ENCODE measurements at regions of chr18 and their contacts with region 1.

Region 1: GRCh38 chr18:42114310-42114943 is 159.4 kb downstream of the PIK3C3 start:
- DNase-seq: peak in 34 of 35 experiments; percentile 5 to 70 (median 26)
- ATAC-seq: peak in 3 of 4 experiments; percentile 60 to 73 (median 68)
- H3K4me3 ChIP-seq: no peak overlapping the region
- H3K4me3 Mint-ChIP-seq: no peak overlapping the region
- H3K27ac ChIP-seq: no peak overlapping the region
- H3K27ac Mint-ChIP-seq: peak overlapping the region in 1 of 2 donors; percentile 69
- H3K4me1 ChIP-seq: peaks cover 0 to 3% of the 10 kb centered on the region in 2 experiments
- H3K4me1 Mint-ChIP-seq: peaks cover 12 to 13% (median 12%) of the 10 kb centered on the region in 3 donors
- H3K27me3 ChIP-seq: peaks cover 0 to 2% of the 10 kb centered on the region in 2 experiments
- H3K27me3 Mint-ChIP-seq: peaks cover 0 to 4% of the 10 kb centered on the region in 2 donors

Region 2: DNA sequence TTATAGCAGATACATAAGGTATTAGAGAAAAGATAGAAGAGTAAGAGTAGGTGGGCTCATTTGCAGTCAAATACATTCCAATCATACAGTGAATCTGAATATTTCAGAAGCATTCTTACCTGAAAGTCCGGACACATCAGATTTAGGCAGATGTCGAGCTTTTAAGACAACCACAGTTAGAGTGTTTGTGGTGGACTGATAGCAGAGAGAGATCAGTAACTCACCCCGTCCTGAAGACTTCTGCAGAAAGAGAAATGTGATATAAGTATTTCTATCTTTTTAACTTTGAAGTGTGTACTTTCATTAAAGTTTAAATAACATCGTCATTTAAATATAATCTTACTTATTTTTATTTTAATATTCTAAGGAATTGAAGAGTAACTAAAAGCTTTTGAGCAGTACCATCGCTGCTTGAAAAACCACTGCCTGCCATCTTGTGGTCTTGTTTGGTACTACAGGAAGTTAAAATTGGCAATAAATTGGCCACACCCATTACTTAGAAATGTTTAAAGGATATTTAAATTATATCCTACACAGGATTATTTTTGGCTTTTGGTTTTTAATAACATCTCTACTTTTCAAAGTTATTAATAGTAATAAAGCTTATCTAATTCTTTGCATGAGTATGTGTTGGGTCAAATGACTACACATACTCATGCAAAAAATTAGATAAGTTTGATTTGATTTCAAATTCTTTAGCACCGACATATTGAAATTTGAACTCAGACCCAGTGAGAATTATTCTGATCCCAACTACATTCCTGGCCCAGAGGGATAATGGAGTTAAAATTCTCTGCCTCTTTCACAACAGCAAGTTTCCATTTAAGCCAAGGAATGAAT is 1157.4 kb after region 1 on chr18:
- CTCF ChIA-PET with region 1: interaction called, 18 to 29 read pairs
- POLR2A ChIA-PET with region 1: no interaction called
- DNase-seq: peak in 2 of 35 experiments; percentile 3 to 37
- ATAC-seq: no peak
- H3K4me3 ChIP-seq: no peak overlapping the region
- H3K4me3 Mint-ChIP-seq: no peak overlapping the region
- H3K27ac ChIP-seq: no peak overlapping the region
- H3K27ac Mint-ChIP-seq: no peak overlapping the region
- H3K4me1 ChIP-seq: no peaks in the 10 kb centered on the region
- H3K4me1 Mint-ChIP-seq: peaks cover 0 to 3% (median 3%) of the 10 kb centered on the region in 3 donors
- H3K27me3 ChIP-seq: no peaks in the 10 kb centered on the region
- H3K27me3 Mint-ChIP-seq: peaks cover 0 to 6% of the 10 kb centered on the region in 2 donors

Region 3: GRCh38 chr18:43587538-43588153 is 1473.2 kb after region 1 on chr18:
- CTCF ChIA-PET with region 1: interaction called, 5 to 11 read pairs
- POLR2A ChIA-PET with region 1: no interaction called
- DNase-seq: peak in 1 of 35 experiments; percentile 15
- ATAC-seq: no peak
- H3K4me3 ChIP-seq: no peak overlapping the region
- H3K4me3 Mint-ChIP-seq: no peak overlapping the region
- H3K27ac ChIP-seq: no peak overlapping the region
- H3K27ac Mint-ChIP-seq: no peak overlapping the region
- H3K4me1 ChIP-seq: no peaks in the 10 kb centered on the region
- H3K4me1 Mint-ChIP-seq: no peaks in the 10 kb centered on the region
- H3K27me3 ChIP-seq: peaks cover 0 to 6% of the 10 kb centered on the region in 2 experiments
- H3K27me3 Mint-ChIP-seq: no peaks in the 10 kb centered on the region